SK-N-SH (cell line): ENCODE measurements at regions of chr1 and their contacts with region 1.

Region 1: DNA sequence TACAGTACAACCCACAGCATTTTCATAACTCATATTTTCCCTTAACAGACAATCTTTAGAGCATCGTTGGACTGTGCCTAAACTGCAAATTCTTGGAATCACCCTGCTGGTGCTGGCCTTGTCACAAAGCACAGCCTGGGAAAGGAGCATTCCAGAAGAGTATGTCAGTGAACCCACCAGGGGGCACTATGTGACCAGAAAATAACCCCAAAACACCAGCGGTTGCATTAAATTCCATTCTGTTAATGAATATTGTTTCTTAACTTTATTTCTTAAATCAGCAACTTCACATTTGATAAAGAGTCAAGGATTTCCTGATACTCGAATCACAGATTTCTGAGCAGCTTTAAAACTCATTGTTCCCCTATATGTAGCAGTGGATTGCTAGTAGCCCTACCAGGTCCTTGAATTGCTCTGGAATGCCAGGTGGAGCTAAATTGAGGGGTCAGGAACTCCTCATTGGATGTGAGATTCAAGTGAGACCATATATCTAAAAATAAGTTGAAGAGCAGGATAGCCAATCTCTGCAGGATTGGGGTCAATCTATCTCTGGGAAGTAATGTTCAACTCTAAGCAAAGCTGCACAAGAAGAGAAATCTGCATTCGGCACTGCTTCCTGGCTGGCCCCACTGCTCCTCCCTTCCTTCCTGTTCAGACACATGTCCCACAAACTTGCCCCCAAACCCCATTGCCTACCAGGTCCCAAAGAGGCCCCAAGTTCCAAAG is 12.7 kb upstream of the RAB4A start:
- DNase-seq: peak; percentile 69
- H3K4me3 ChIP-seq: no peak overlapping the region
- H3K27ac ChIP-seq: no peak overlapping the region
- H3K4me1 ChIP-seq: peaks cover 0 to 5% of the 10 kb centered on the region in 2 experiments; a peak in 2 of 4 replicates
- H3K27me3 ChIP-seq: no peaks in the 10 kb centered on the region
- CTCF ChIP-seq: peak; percentile 90
- EP300 ChIP-seq: no peak
- RAD21 ChIP-seq: peak; percentile 96

Region 2: DNA sequence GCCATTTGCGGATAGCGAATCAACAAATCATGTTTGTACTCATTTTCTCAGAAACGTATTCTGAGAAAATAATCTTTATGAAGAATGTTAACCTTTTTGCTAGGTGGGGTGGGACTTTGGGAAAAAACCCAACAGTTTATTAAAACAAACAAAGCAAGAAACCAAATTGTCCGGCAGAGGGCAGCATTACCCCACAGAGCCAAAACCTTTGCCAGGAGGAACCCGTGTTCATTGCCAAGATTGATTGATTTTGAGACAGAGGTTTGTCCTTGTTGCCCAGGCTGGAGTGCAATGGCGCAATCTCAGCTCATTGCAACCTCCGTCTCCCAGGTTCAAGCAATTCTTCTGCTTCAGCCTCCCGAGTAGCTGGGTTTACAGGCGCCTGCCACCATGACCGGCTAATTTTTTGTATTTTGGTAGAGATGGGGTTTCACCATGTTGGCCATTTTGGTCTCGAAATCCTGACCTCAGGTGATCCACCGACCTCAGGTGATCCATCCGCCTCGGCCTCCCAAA is 593.7 kb before region 1 on chr1:
- CTCF ChIA-PET with region 1: interaction called, 52 read pairs
- POLR2A ChIA-PET with region 1: no interaction called
- DNase-seq: peak; percentile 72
- H3K4me3 ChIP-seq: no peak overlapping the region
- H3K27ac ChIP-seq: no peak overlapping the region
- H3K4me1 ChIP-seq: no peaks in the 10 kb centered on the region
- H3K27me3 ChIP-seq: no peaks in the 10 kb centered on the region
- CTCF ChIP-seq: peak; percentile 94
- EP300 ChIP-seq: no peak
- RAD21 ChIP-seq: peak; percentile 95

Region 3: DNA sequence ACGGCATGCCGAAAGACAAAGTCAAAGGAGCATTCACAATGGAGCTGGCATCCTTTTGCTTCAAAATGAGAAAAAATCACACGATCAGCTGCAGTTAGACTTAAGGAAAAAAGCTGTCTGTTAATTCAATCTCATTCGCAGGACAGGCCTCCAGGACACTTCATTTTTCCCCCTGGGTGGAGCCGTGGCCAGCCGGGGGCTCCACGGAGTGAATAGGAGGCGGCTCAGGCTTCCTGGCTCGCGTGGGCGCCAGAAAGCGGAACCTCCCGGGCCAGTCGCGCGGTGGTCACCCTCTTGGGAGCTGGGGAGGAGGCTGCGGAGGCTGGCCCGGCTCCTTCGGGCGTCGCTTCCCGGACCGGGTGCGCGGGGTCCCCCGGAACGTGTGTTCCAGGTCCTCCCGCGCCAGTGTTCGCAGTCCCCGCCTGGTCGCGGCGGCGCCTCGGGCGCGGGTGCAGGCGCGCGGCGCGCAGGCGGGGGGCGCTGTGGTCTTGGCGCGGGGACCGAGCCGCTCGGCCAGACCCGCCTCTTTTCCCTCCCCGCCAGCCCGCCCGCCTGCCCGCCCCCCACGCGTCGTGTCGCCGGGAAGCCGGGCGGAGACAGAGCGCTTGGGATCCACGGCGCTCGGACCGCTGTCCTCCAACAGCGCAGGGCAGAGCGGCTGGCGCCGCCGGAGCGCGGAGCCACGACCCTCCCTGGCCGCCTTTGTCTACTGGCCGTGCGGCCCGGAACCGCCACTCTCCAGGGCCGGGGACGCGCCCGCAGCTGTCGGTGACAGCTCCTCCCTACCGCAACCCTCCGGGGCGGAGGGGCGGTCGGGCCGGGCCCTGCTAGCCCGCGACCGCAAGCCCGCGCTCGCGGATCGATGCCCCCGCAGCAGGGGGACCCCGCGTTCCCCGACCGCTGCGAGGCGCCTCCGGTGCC is 523.1 kb before region 1 on chr1 and contains the start of gene RHOU:
- CTCF ChIA-PET with region 1: interaction called, 21 read pairs
- POLR2A ChIA-PET with region 1: no interaction called
- DNase-seq: peak; percentile 95
- H3K4me3 ChIP-seq: peak within 1 kb of the TSS; percentile 74 to 76
- H3K27ac ChIP-seq: peak within 1 kb of the TSS in 1 of 2 experiments; percentile 77; a peak in 2 of 4 replicates
- H3K4me1 ChIP-seq: peaks cover 0 to 14% of the 10 kb centered on the region in 2 experiments; a peak in 2 of 4 replicates
- H3K27me3 ChIP-seq: peaks cover 8% of the 10 kb centered on the region; the same call in 1 of the 2 replicates
- CTCF ChIP-seq: peak; percentile 54
- EP300 ChIP-seq: no peak
- RAD21 ChIP-seq: peak; percentile 63
- polyA plus RNA-seq, gene RHOU: 0.36 and 0.44 TPM in 2 replicates

Region 4: GRCh38 chr1:229270547-229271447 is 12.6 kb after region 1 on chr1 and contains the start of gene RAB4A:
- CTCF ChIA-PET with region 1: interaction called, 15 read pairs
- POLR2A ChIA-PET with region 1: interaction called, 3 read pairs
- DNase-seq: peak; percentile 99
- H3K4me3 ChIP-seq: peak within 1 kb of the TSS; percentile 77 to 80
- H3K27ac ChIP-seq: peak within 1 kb of the TSS; percentile 36 to 64; a peak in 3 of 4 replicates
- H3K4me1 ChIP-seq: peaks cover 0 to 15% of the 10 kb centered on the region in 2 experiments; a peak in 3 of 4 replicates
- H3K27me3 ChIP-seq: no peaks in the 10 kb centered on the region
- CTCF ChIP-seq: no peak
- EP300 ChIP-seq: no peak
- RAD21 ChIP-seq: no peak
- polyA plus RNA-seq, gene RAB4A: 25.5 and 28.1 TPM in 2 replicates

Region 5: DNA sequence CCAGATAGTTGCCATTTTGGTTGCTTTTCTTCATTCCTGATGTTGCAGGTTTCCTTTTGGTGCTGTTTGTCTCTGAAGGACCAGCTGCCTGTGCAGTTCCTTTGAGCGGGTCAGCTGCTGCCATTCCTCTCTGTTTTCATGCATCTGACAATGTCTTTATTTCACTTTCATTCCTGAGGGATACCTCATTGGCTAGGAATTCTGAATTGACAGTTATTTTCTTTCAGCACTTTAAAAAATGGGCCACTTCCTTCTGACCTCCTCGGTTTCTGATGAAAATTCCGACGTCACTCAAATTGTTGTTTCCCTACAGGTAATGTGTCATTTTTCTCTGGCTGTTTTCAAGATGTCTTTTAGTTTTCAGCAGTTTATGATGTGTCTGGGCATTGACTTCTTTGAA is 59.9 kb after region 1 on chr1:
- CTCF ChIA-PET with region 1: no interaction called
- POLR2A ChIA-PET with region 1: no interaction called
- DNase-seq: no peak
- H3K4me3 ChIP-seq: no peak overlapping the region
- H3K27ac ChIP-seq: no peak overlapping the region
- H3K4me1 ChIP-seq: no peaks in the 10 kb centered on the region
- H3K27me3 ChIP-seq: no peaks in the 10 kb centered on the region
- CTCF ChIP-seq: no peak
- EP300 ChIP-seq: no peak
- RAD21 ChIP-seq: no peak

Region 6: GRCh38 chr1:229440851-229441537 is 182.8 kb after region 1 on chr1:
- CTCF ChIA-PET with region 1: interaction called, 13 read pairs
- POLR2A ChIA-PET with region 1: no interaction called
- DNase-seq: no peak
- H3K4me3 ChIP-seq: no peak overlapping the region
- H3K27ac ChIP-seq: peak overlapping the region in 1 of 2 experiments; percentile 37; a peak in 3 of 4 replicates
- H3K4me1 ChIP-seq: peaks cover 4 to 5% of the 10 kb centered on the region in 2 experiments; a peak in 1 of 4 replicates
- H3K27me3 ChIP-seq: no peaks in the 10 kb centered on the region
- CTCF ChIP-seq: no peak
- EP300 ChIP-seq: no peak
- RAD21 ChIP-seq: no peak

Region 7: GRCh38 chr1:229470406-229471043 is 212.3 kb after region 1 on chr1:
- CTCF ChIA-PET with region 1: interaction called, 29 read pairs
- POLR2A ChIA-PET with region 1: no interaction called
- DNase-seq: no peak
- H3K4me3 ChIP-seq: no peak overlapping the region
- H3K27ac ChIP-seq: no peak overlapping the region
- H3K4me1 ChIP-seq: no peaks in the 10 kb centered on the region
- H3K27me3 ChIP-seq: no peaks in the 10 kb centered on the region
- CTCF ChIP-seq: no peak
- EP300 ChIP-seq: no peak
- RAD21 ChIP-seq: no peak

Region 8: DNA sequence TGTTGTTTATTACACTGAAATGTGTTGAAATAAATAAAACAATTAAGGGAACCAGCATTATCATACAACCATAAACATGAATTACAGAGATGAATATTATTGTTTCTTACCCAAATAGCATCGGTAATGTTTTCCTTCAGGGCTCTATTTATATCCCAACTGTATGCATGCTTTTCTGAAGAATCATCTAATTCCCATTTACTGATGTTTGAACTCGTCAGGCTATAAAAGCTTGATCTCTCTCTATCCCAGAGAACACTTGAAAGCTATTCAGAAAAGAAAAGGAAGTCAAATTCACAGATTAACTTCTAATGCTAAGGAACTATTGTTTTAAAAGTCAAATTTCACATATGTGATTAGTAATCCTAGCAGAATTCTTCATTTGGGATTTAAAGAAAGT is 237.6 kb after region 1 on chr1:
- CTCF ChIA-PET with region 1: interaction called, 10 read pairs
- POLR2A ChIA-PET with region 1: no interaction called
- DNase-seq: no peak
- H3K4me3 ChIP-seq: no peak overlapping the region
- H3K27ac ChIP-seq: no peak overlapping the region
- H3K4me1 ChIP-seq: no peaks in the 10 kb centered on the region
- H3K27me3 ChIP-seq: no peaks in the 10 kb centered on the region
- CTCF ChIP-seq: no peak
- EP300 ChIP-seq: no peak
- RAD21 ChIP-seq: no peak